A549 (cell line): ENCODE measurements at regions of chr11 and their contacts with region 1.

Region 1: DNA sequence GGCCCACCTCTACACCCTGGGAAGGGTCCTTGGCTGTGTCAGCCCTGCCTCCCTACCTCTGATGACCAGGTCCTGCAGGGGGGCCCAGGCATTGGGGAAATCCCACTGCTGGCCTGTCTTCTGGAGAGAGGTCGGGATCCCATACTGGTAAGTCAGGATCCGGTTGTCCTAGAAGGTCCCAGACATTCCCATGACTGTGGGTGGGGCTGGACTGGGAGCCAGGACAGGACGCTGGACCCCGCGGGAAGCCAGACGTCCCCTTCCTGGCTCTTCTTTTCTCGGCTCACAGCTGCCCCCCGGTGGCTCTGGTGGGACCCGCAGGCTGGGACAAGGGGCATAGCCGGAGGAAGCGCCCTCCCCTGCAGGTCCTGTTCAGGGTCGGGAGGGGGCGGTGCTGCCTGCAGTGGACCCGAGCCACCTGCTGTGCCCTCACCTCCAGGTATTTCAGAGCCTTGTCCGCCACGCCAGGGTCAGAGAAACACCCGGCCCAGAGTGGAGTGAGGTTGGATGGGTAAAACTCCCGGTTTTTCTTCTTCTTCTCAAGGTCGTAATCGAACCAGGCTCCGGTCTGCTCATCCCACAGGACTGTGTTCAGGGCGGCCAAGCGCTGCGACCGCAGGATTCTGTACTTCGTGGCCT is 20.0 kb downstream of the TREH start:
- DNase-seq: peak; percentile 75 to 87
- ATAC-seq: peak; percentile 85 to 94
- H3K4me3 ChIP-seq: no peak overlapping the region
- H3K27ac ChIP-seq: peak overlapping the region in 1 of 2 experiments; percentile 70; a peak in 2 of 6 replicates
- H3K4me1 ChIP-seq: peaks cover 4% of the 10 kb centered on the region; the same call in 1 of the 3 replicates
- CTCF ChIP-seq: peak; percentile 72
- EP300 ChIP-seq: no peak
- POLR2A ChIP-seq: no peak
- RAD21 ChIP-seq: peak; percentile 67 to 77

Region 2: DNA sequence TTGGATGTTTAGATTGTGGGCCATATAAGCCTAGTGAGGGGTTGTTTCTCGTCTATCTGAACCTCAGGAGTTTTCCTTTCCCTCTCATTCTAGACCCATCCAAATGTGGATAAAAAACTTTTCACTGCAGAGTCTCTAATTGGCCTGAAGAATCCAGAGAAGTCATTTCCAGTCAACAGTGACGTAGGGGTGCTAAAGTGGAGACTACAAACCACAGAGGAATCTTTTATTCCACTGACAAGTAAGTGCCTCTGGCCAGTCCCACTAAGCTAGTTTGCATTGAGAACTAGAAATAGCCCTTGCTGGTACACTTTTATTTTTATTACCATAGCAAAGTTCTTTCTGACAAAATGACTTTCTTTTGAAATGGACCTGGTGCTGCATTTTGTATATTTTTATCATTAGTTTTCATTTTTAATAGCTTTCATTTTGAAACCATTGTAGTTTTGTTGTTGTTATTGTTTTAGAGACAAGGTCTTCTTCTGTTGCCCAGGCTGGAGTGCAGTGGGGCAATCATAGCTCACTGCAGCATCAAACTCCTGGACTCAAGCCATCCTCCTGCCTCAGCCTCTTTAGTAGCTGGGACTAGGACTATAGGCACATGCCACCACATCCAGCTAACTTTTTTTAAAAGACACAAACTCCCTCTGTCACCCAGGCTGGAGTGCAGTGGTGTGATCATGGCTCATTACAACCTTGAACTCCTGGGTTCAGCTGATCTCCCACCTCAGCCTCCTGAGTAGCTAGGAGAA is 66.6 kb before region 1 on chr11:
- CTCF ChIA-PET with region 1: interaction called, 45 read pairs
- POLR2A ChIA-PET with region 1: no interaction called
- DNase-seq: no peak
- ATAC-seq: no peak
- H3K4me3 ChIP-seq: no peak overlapping the region
- H3K27ac ChIP-seq: no peak overlapping the region
- H3K4me1 ChIP-seq: no peaks in the 10 kb centered on the region
- CTCF ChIP-seq: no peak
- EP300 ChIP-seq: no peak
- POLR2A ChIP-seq: no peak
- RAD21 ChIP-seq: no peak

Region 3: GRCh38 chr11:118610804-118611795 is 48.3 kb before region 1 on chr11:
- CTCF ChIA-PET with region 1: interaction called, 90 read pairs
- POLR2A ChIA-PET with region 1: no interaction called
- DNase-seq: peak; percentile 29 to 63
- ATAC-seq: peak; percentile 16 to 62; a peak in 4 of 6 replicates
- H3K4me3 ChIP-seq: no peak overlapping the region
- H3K27ac ChIP-seq: peak overlapping the region in 1 of 2 experiments; percentile 66; a peak in 3 of 6 replicates
- H3K4me1 ChIP-seq: peaks cover 45% of the 10 kb centered on the region
- CTCF ChIP-seq: peak; percentile 68
- EP300 ChIP-seq: no peak
- POLR2A ChIP-seq: no peak
- RAD21 ChIP-seq: peak; percentile 30 to 47; a peak in 4 of 5 replicates

Region 4: GRCh38 chr11:118621071-118621783 is 38.2 kb before region 1 on chr11:
- CTCF ChIA-PET with region 1: interaction called, 11 read pairs
- POLR2A ChIA-PET with region 1: no interaction called
- DNase-seq: no peak
- ATAC-seq: no peak
- H3K4me3 ChIP-seq: no peak overlapping the region
- H3K27ac ChIP-seq: peak overlapping the region; percentile 69 to 92; a peak in 5 of 6 replicates
- H3K4me1 ChIP-seq: peaks cover 78% of the 10 kb centered on the region
- CTCF ChIP-seq: no peak
- EP300 ChIP-seq: no peak
- POLR2A ChIP-seq: no peak
- RAD21 ChIP-seq: no peak

Region 5: GRCh38 chr11:118635237-118635591 is 24.2 kb before region 1 on chr11:
- CTCF ChIA-PET with region 1: interaction called, 12 read pairs
- POLR2A ChIA-PET with region 1: no interaction called
- DNase-seq: no peak
- ATAC-seq: no peak
- H3K4me3 ChIP-seq: no peak overlapping the region
- H3K27ac ChIP-seq: no peak overlapping the region
- H3K4me1 ChIP-seq: peaks cover 5% of the 10 kb centered on the region; the same call in 2 of the 3 replicates
- CTCF ChIP-seq: no peak
- EP300 ChIP-seq: no peak
- POLR2A ChIP-seq: no peak
- RAD21 ChIP-seq: no peak

Region 6: DNA sequence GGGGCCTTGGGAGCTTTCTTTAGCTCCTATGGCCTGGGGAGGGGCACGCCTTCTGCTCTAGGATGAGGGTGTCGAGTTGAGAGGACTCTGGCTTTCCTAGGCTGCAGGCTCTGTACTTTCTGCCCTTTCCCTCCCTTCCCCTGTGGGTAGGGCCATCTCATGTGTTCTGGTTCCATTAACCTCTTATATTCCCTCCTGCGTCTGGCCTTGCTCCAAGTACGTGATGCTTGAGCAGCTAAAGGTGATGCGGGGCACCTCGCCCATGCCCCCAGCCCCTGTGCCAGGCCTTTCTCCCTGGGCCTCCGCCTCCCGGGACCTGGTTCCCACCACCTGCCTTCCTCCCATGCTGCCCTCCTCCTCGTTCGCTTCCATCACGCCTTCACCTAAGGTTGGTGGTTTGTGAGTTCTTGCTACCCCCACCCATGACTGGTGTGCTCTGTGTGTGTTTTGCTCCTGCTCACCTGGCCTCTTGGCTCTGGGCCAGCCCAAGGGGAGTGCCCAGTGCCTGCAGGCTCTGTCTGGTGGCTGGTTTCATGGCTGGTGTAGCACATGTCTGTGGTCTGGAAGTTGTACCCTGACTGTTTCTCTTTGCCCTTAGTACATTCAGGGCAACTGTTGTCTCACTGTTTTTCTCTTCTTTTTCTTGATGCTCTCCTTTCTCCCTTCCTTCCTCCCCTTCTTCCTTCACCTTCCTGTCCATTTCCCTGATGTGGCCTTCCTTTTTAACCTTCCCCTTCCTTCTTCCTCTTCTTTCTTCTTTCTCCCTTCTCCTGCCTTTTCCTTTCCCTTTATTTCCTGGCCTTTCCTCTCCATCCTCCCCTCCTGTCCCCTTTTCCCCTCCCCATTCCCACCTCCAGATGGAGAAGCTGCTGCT is 17.8 kb before region 1 on chr11:
- CTCF ChIA-PET with region 1: interaction called, 12 read pairs
- POLR2A ChIA-PET with region 1: no interaction called
- DNase-seq: no peak
- ATAC-seq: no peak
- H3K4me3 ChIP-seq: no peak overlapping the region
- H3K27ac ChIP-seq: no peak overlapping the region
- H3K4me1 ChIP-seq: peaks cover 1% of the 10 kb centered on the region; the same call in 2 of the 3 replicates
- CTCF ChIP-seq: no peak
- EP300 ChIP-seq: no peak
- POLR2A ChIP-seq: no peak
- RAD21 ChIP-seq: no peak